Activated CD4-positive, alpha-beta T cell treated with anti-CD3 and anti-CD28 coated beads, Interleukin-2, amount 10 ng/mL, durations not matched to agents 24 days and 14 days (primary cell): ENCODE measurements at regions of chr1 and their contacts with region 1.

Region 1: GRCh38 chr1:208025031-208025430 is 114.1 kb upstream of the CD34 start:
- DNase-seq: no peak
- H3K4me3 Mint-ChIP-seq: no peak overlapping the region
- H3K27ac Mint-ChIP-seq: no peak overlapping the region
- H3K4me1 Mint-ChIP-seq: no peaks in the 10 kb centered on the region
- H3K27me3 Mint-ChIP-seq: peaks cover 4% of the 10 kb centered on the region

Region 2: DNA sequence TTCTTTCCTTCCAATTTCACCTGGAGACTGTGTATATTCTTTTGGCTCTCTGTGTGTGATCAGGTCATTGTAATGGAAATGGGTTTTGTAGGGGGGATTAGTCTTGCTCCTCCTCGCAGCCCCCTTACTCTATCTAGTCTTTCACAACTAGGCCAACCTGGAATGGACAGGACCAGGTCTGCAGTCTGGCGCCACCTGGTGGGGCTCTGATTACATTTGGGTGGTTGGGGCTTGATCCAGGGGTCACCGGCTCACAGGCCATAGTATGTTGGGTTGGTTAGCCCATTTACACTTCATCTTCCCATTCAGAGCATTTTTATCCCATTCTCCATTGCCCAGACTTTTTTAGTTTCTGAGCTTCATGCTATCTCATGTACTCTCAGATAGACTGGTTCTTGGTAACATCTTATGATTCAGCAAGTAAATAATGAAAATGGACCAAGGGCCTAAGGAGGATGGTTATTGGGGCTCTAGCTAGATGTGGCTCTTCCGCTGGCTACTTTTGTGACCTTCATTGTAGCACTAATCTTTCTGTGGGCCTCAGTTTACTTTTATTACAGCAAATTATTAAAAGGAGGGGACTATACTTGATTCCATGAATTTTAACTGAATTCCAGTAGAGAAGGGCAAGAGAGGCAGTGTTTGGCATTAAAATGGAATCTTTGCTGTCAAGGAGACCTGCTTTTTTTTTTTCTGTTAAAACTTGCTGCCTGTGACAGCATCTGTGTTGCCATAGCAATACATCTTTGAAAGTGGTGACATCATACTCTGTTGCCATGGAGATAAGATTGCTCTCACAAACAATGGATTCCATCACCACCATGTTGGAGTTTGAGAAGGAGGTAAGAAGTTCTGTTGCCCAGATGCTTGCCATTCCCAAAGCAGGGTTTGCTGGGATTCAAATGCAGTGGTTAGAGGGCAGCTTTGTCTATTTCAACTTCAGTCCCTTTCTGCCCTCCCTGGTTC is 69.0 kb after region 1 on chr1:
- intact Hi-C with region 1: loop called (anchors 1 kb)
- DNase-seq: peak; percentile 89
- H3K4me3 Mint-ChIP-seq: no peak overlapping the region
- H3K27ac Mint-ChIP-seq: no peak overlapping the region
- H3K4me1 Mint-ChIP-seq: no peaks in the 10 kb centered on the region
- H3K27me3 Mint-ChIP-seq: peaks cover 6% of the 10 kb centered on the region

Region 3: DNA sequence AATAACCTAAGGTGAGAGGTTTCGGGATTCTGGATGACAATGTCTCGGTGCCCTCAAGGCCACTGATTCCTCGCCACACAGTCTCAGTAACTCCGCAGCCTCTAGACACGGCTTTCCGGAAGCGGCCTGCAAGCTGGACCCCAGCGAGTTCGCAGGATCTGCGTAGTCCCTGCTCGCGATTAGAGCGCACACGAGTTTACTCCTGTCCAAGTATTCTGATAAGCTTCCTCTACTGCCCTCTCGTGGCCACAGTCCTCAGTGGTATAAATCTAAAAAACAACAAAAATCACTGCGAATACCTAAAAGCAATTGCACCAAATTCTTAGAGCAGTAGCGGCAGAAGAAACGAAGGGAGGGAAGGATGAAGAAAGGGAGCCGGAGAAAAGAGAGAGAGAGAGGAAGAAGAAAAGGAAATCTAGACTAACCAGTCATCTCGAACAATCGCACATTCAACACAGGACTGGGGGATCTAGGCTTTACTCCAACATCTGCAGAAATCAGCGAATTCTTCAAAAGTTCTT is 220.2 kb after region 1 on chr1:
- intact Hi-C with region 1: loop called (anchors 1 kb)
- DNase-seq: peak; percentile 92
- H3K4me3 Mint-ChIP-seq: peak overlapping the region; percentile 73
- H3K27ac Mint-ChIP-seq: no peak overlapping the region
- H3K4me1 Mint-ChIP-seq: peaks cover 10% of the 10 kb centered on the region
- H3K27me3 Mint-ChIP-seq: peaks cover 46% of the 10 kb centered on the region